ENCODE measurements at regions of chr18 and their contacts with region 1.

Region 1: DNA sequence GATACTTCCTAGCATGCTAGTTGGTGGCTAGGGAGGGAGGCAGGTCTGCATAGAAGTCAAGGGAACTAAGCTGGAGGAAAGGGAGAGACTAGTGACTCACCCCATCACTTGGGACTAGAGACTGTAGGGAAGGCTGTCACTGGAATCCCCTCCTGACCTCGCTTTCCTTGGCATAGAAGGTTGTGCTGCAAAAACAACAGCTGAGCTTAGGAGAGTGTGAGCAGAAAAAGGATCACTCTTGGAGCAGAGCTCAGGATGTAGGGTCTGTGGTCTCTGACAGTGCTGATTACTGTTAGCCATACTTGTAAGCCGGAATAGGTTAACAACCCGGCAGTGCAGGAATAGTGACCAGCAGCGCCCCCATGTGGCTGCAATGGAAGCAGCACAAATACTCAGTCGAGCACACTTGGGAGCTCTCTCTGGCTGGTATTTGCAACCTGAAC is 66.9 kb upstream of the SMAD2 start:
- DNase-seq: no peak
- ATAC-seq: no peak
- H3K4me3 Mint-ChIP-seq: no peak overlapping the region
- H3K27ac Mint-ChIP-seq: no peak overlapping the region
- H3K4me1 Mint-ChIP-seq: no peaks in the 10 kb centered on the region
- H3K27me3 Mint-ChIP-seq: peaks cover 17% of the 10 kb centered on the region
- CTCF ChIP-seq: no peak

Region 2: DNA sequence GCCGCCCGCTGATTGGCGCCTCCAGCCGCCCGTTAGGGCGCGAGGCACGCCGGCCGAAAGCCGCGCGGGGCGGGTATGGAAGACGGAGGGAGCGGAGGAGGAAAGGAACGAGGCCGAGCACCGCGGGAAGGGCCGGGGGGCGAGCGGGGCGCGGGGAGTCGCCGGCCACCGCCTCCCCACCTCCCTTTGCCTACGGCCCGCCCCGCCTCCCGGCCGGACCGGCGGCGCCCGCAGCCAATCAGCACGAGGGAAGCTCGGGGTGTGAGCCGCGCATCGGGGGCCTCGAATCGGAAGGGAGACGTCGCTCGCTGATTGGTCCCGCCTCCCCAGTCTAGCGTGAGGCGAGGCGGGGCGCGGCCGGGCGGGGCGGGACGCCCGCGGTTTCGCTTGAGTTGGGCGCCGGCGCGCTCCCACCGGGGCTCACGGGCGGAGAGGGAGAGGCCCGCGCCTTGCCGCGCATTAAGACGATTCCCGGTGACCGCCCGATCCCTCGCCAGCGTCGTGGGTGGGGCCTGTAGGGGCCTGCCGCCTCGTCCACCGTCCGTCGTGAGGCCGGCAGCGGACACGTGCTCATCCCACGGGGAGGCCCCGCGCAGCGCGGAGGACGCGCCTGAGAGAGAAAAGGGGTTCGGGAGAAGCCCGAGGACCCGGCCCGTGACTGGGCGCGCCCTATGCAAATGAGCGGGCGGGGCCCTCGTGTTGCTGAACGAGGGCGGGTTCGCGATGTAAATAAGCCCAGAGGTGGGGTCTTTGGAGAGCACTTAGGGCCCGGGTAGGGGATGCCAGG is 66.2 kb before region 1 on chr18:
- CTCF ChIA-PET with region 1: no interaction called
- POLR2A ChIA-PET with region 1: no interaction called
- intact Hi-C with region 1: no loop called
- DNase-seq: peak; percentile 93
- ATAC-seq: peak; percentile 80
- H3K4me3 Mint-ChIP-seq: peak overlapping the region; percentile 84
- H3K27ac Mint-ChIP-seq: peak overlapping the region; percentile 87
- H3K4me1 Mint-ChIP-seq: peaks cover 36% of the 10 kb centered on the region
- H3K27me3 Mint-ChIP-seq: no peaks in the 10 kb centered on the region
- CTCF ChIP-seq: no peak

Region 3: DNA sequence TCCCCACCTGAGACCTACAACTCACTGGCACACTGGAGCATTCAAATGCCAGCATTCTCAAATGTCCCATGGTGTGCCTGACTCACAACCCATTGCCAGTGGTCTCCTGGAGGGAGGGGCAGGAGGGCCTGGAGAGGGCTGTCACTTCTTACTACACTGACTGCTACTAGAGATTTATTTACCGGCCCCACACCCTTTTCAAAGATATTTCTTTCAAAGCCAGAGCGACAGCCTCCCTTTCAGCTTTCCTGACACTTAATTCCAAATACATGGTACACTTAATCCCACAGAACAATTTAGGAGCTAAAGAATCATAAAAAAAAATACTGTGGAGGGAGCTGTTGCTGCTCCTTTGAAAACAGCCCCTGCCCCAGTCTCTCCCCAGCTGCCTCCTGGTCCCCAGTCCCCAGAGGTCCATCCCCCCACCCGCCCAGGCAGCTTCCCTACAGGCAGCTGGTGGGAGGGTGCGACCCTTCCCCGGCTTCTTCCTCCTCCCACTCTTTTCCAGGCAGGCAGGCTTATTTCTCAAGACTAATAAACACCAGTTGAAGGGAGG is 62.2 kb after region 1 on chr18:
- CTCF ChIA-PET with region 1: no interaction called
- POLR2A ChIA-PET with region 1: no interaction called
- intact Hi-C with region 1: no loop called
- DNase-seq: no peak
- ATAC-seq: no peak
- H3K4me3 Mint-ChIP-seq: no peak overlapping the region
- H3K27ac Mint-ChIP-seq: no peak overlapping the region
- H3K4me1 Mint-ChIP-seq: no peaks in the 10 kb centered on the region
- H3K27me3 Mint-ChIP-seq: peaks cover 30% of the 10 kb centered on the region
- CTCF ChIP-seq: no peak

Region 4: DNA sequence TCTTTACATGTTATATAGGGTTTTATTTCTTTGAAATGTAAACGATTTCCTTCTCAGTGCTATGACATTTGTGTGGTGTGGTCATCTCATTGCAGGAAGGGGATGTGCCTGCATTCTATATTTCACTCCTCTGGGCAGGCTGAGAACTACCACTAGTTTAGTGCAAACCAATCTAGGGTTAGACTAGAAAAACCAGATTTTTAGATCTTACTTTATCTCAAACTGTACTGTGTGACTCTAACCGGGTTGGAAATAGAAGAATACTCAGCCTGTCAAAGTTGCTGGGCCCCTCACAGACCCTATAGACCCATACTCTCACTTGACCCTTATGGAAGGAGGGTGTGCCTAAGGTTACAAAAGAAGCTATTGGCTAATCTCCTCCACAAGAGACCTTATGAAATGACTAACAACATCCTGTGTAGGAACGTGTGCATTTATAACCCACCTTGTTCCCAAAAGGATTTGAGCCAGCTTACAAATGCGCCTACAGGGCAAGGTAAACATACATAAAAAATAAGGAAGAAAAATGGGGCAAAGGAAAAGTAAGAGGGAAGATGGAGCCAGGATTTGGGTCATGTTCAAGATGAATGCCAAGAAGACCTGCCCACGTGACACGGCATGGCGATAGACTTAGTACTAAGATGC is 158.4 kb after region 1 on chr18:
- CTCF ChIA-PET with region 1: no interaction called
- POLR2A ChIA-PET with region 1: interaction called, 11 read pairs
- intact Hi-C with region 1: no loop called
- DNase-seq: no peak
- ATAC-seq: no peak
- H3K4me3 Mint-ChIP-seq: no peak overlapping the region
- H3K27ac Mint-ChIP-seq: no peak overlapping the region
- H3K4me1 Mint-ChIP-seq: no peaks in the 10 kb centered on the region
- H3K27me3 Mint-ChIP-seq: peaks cover 40% of the 10 kb centered on the region
- CTCF ChIP-seq: no peak

Measured in activated B cell treated with CpG ODN at 0.5 μM for 24 hours (primary cell).